Aorta (tissue), 5 donors: ENCODE measurements at regions of chr12 and their contacts with region 1.

Region 1: DNA sequence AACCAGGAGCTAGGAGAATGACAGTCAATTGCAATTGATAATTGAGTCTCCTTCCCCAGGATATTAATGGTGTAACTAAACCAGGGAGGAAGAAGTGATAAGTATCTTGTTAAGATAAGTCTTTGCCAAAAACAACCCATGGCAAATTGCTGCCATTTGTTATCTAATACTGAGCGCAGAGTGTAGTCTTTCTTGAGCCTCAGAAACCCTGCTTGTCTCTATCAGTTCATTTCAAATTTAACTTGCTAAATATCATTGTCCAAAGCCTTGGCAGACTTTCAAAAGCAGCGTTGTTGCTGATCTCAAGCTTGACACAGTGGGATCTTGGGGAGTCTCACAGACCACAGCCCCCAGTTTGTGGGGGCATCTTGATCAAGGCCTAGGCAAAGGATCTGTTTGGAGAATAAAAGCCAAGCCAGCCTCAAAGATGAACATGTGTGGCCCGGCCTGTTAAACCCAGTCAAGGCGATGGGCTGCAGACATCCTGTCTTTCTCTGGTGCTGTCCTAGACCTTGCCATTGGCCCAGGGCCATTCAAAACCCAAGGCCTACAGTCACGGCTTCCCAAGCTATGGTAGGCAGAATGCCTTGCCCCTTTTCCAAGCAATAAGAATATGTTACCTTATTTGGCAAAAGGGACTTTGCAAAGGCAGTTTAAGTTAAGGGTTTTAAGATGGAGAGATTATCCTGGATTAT is 164.2 kb downstream of the CHST11 start:
- DNase-seq: peak in 1 of 2 donors; percentile 72
- ATAC-seq: peak; percentile 60
- H3K4me3 ChIP-seq: no peak overlapping the region
- H3K27ac ChIP-seq: peak overlapping the region in 1 of 2 donors; percentile 58
- H3K4me1 ChIP-seq: peaks cover 0 to 2% of the 10 kb centered on the region in 2 donors
- H3K27me3 ChIP-seq: no peaks in the 10 kb centered on the region

Region 2: GRCh38 chr12:104695453-104696148 is 74.6 kb after region 1 on chr12:
- intact Hi-C with region 1: loop called in 1 of 2 experiments (anchors 10 kb)
- DNase-seq: peak; percentile 76 to 86
- ATAC-seq: peak; percentile 81
- H3K4me3 ChIP-seq: no peak overlapping the region
- H3K27ac ChIP-seq: peak overlapping the region in 1 of 2 donors; percentile 4
- H3K4me1 ChIP-seq: no peaks in the 10 kb centered on the region
- H3K27me3 ChIP-seq: no peaks in the 10 kb centered on the region